ENCODE measurements at regions of chr19 and their contacts with region 1.

Region 1: GRCh38 chr19:525857-526425 is 5.6 kb upstream of the CDC34 start:
- DNase-seq: no peak
- H3K27ac ChIP-seq: no peak overlapping the region
- CTCF ChIP-seq: no peak

Region 2: DNA sequence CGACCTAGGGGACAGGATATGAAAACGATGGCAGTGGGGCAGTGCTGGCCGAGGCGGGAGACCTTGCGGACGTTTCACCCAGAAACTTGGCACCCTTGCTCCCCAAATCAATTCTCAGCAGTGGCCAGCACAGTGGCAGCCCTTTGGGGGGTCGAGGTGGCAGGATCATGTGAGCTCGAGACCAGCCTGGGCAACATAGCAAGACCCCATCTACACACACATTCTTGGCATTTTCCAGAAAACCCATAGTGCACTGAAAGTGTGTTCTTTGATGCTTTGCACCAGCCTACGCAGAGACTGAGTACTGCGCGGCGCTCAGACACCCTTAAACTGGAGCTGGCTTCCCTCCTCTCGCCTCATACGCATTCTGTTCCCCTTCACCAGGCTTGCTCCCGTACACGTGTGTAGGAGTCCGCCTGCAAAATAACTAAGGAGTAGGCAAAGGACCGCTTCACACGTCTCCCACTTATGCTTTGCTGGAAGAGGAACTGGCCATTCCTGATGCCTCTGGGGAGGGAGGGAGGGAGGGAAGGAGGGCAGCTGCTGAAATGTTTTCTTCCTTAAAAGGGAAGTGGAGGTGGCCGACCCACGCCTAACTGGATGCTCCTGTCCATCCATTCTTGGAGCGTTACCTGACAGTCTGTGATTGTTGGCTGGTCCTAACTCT is 157.8 kb before region 1 on chr19:
- CTCF ChIA-PET with region 1: no interaction called
- POLR2A ChIA-PET with region 1: interaction called, 12 read pairs
- DNase-seq: no peak
- H3K27ac ChIP-seq: no peak overlapping the region
- CTCF ChIP-seq: no peak

Measured in RWPE1 (cell line).